ENCODE measurements at regions of chr3 and their contacts with region 1.

Region 1: GRCh38 chr3:9731206-9732079 is at the start of gene BRPF1:
- DNase-seq: peak; percentile 96
- H3K4me3 Mint-ChIP-seq: peak within 1 kb of the TSS; percentile 96
- H3K27ac Mint-ChIP-seq: peak within 1 kb of the TSS; percentile 94
- H3K4me1 Mint-ChIP-seq: peaks cover 58% of the 10 kb centered on the region
- H3K27me3 Mint-ChIP-seq: no peaks in the 10 kb centered on the region
- total RNA-seq, gene BRPF1: 44.6 and 45.9 TPM in 2 replicates

Region 2: GRCh38 chr3:8963137-8963869 is 768.1 kb before region 1 on chr3 and contains the start of gene RAD18:
- intact Hi-C with region 1: loop called (anchors 1 kb)
- DNase-seq: peak; percentile 91
- H3K4me3 Mint-ChIP-seq: peak within 1 kb of the TSS; percentile 98
- H3K27ac Mint-ChIP-seq: peak within 1 kb of the TSS; percentile 97
- H3K4me1 Mint-ChIP-seq: peaks cover 62% of the 10 kb centered on the region
- H3K27me3 Mint-ChIP-seq: peaks cover 7% of the 10 kb centered on the region
- total RNA-seq, gene RAD18: 52.8 and 54.2 TPM in 2 replicates

Region 3: GRCh38 chr3:9396700-9397521 is 334.5 kb before region 1 on chr3:
- intact Hi-C with region 1: loop called (anchors 1 kb)
- DNase-seq: peak; percentile 98
- H3K4me3 Mint-ChIP-seq: peak overlapping the region; percentile 94
- H3K27ac Mint-ChIP-seq: peak overlapping the region; percentile 98
- H3K4me1 Mint-ChIP-seq: peaks cover 65% of the 10 kb centered on the region
- H3K27me3 Mint-ChIP-seq: no peaks in the 10 kb centered on the region

Region 4: GRCh38 chr3:9749645-9750555 is 18.5 kb after region 1 on chr3 and contains the start of gene OGG1:
- intact Hi-C with region 1: loop called (anchors 1 kb)
- DNase-seq: peak; percentile 96
- H3K4me3 Mint-ChIP-seq: peak within 1 kb of the TSS; percentile 96
- H3K27ac Mint-ChIP-seq: peak within 1 kb of the TSS; percentile 95
- H3K4me1 Mint-ChIP-seq: peaks cover 61% of the 10 kb centered on the region
- H3K27me3 Mint-ChIP-seq: no peaks in the 10 kb centered on the region
- total RNA-seq, gene OGG1: 40.2 and 40.6 TPM in 2 replicates

Region 5: GRCh38 chr3:9809615-9810432 is 78.4 kb after region 1 on chr3 and contains the start of gene TTLL3:
- intact Hi-C with region 1: loop called (anchors 1 kb)
- DNase-seq: peak; percentile 22
- H3K4me3 Mint-ChIP-seq: peak within 1 kb of the TSS; percentile 86
- H3K27ac Mint-ChIP-seq: peak within 1 kb of the TSS; percentile 93
- H3K4me1 Mint-ChIP-seq: peaks cover 41% of the 10 kb centered on the region
- H3K27me3 Mint-ChIP-seq: no peaks in the 10 kb centered on the region
- total RNA-seq, gene TTLL3: 26.5 and 33.6 TPM in 2 replicates

Region 6: GRCh38 chr3:10010486-10011465 is 279.3 kb after region 1 on chr3:
- intact Hi-C with region 1: loop called (anchors 1 kb)
- DNase-seq: peak; percentile 85
- H3K4me3 Mint-ChIP-seq: peak overlapping the region; percentile 70
- H3K27ac Mint-ChIP-seq: no peak overlapping the region
- H3K4me1 Mint-ChIP-seq: peaks cover 29% of the 10 kb centered on the region
- H3K27me3 Mint-ChIP-seq: peaks cover 4% of the 10 kb centered on the region